ENCODE measurements at regions of chr18 and their contacts with region 1.

Region 1: DNA sequence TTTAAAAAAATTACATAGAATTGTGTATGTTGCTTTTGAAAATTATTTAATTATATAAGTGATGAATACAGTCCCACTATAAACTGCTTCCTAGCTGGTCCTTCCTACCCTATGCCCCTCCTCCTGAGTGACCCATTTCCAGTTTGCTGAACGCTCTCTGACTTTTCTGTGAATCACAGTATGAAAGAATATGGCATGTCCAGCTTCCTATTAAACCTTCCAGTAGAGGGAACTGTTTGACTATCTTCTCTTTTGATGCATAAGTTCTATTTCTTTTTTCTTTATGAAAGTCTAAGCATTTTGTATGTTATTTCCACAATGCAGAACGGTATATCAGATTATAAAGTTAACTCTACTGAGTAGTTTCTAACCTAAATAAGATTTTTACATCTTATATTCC is 41.3 kb downstream of the PSMG2 start:
- DNase-seq: peak; percentile 64
- H3K4me3 ChIP-seq: no peak overlapping the region
- H3K27ac ChIP-seq: no peak overlapping the region
- H3K4me1 ChIP-seq: peaks cover 15% of the 10 kb centered on the region
- H3K27me3 ChIP-seq: no peaks in the 10 kb centered on the region
- CTCF ChIP-seq: peak; percentile 65 to 66

Region 2: DNA sequence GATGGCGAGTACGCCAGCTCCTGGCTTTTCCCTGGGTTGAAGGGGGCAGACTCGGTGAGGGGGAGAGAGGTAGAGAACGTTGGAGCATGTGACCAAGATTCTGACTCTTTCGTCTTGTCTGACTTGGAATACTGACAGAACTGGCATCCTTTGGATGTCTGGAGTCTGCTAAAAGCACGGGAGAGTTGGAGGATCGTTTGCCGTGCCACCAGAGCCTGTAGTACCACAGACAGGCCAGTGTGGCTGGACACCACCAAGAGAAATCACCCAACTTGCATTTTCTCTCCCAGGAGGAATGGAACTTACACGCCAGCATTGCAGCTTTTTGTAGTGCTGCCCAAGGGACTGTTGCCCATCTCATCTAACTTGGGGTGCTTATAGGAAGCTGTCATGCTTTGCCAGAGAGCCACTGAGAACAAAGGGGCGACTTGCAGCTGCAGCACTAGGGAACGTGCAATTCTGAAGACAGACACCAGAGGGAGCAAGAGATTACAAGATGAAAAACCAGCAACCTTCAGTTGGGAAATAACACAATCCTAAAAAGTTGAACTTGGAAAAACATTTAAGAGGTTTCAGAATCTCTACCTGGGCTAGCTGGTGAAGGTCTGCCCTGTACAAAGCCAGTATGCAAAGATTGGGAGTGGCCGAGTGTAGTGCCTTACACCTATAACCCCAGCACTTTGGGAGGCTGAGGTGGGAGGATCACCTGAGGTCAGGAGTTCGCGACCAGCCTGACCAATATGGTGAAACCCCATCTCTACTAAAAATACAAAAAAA is 17.1 kb before region 1 on chr18:
- CTCF ChIA-PET with region 1: interaction called, 3 read pairs
- dilution Hi-C with region 1: no loop called
- in situ Hi-C with region 1: no loop called
- intact Hi-C with region 1: loop called (anchors 1 kb)
- DNase-seq: peak; percentile 54
- H3K4me3 ChIP-seq: no peak overlapping the region
- H3K27ac ChIP-seq: no peak overlapping the region
- H3K4me1 ChIP-seq: peaks cover 5% of the 10 kb centered on the region
- H3K27me3 ChIP-seq: no peaks in the 10 kb centered on the region
- CTCF ChIP-seq: peak; percentile 83 to 91

Region 3: GRCh38 chr18:12849545-12849944 is 105.4 kb after region 1 on chr18:
- CTCF ChIA-PET with region 1: interaction called, 4 read pairs
- dilution Hi-C with region 1: loop called (anchors 5 kb)
- in situ Hi-C with region 1: no loop called
- intact Hi-C with region 1: no loop called
- DNase-seq: peak; percentile 22
- H3K4me3 ChIP-seq: no peak overlapping the region
- H3K27ac ChIP-seq: no peak overlapping the region
- H3K4me1 ChIP-seq: no peaks in the 10 kb centered on the region
- H3K27me3 ChIP-seq: no peaks in the 10 kb centered on the region
- CTCF ChIP-seq: no peak

Region 4: DNA sequence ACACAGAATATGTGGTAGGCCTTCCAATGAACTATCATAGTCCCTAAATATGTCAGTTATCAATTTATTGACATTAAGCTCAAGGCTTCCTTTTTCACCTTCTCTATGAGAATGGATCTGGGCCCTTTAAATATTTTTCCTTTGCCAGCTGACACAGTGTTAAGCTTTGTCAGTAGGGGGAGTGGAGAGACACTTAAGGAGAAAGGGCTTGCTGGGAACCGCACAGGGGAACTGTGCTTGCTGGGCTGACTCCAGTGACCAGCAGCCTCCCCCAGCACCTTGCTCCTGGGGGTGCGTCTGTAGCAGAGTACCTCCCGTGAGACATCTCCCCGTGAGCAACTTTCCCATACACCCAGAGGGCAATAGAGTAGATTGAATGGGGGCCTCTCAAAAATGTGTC is 146.4 kb after region 1 on chr18:
- CTCF ChIA-PET with region 1: no interaction called
- dilution Hi-C with region 1: no loop called
- in situ Hi-C with region 1: no loop called
- intact Hi-C with region 1: loop called (anchors 1 kb)
- DNase-seq: no peak
- H3K4me3 ChIP-seq: no peak overlapping the region
- H3K27ac ChIP-seq: peak overlapping the region; percentile 7
- H3K4me1 ChIP-seq: no peaks in the 10 kb centered on the region
- H3K27me3 ChIP-seq: no peaks in the 10 kb centered on the region
- CTCF ChIP-seq: peak in 1 of 2 donors; percentile 2

Region 5: GRCh38 chr18:13159579-13159978 is 415.5 kb after region 1 on chr18:
- CTCF ChIA-PET with region 1: no interaction called
- dilution Hi-C with region 1: no loop called
- in situ Hi-C with region 1: loop called (anchors 25 kb)
- intact Hi-C with region 1: loop called (anchors 5 kb)
- DNase-seq: peak; percentile 52
- H3K4me3 ChIP-seq: no peak overlapping the region
- H3K27ac ChIP-seq: no peak overlapping the region
- H3K4me1 ChIP-seq: no peaks in the 10 kb centered on the region
- H3K27me3 ChIP-seq: no peaks in the 10 kb centered on the region
- CTCF ChIP-seq: peak; percentile 74 to 79